ENCODE measurements at regions of chr5 and their contacts with region 1.

Region 1: DNA sequence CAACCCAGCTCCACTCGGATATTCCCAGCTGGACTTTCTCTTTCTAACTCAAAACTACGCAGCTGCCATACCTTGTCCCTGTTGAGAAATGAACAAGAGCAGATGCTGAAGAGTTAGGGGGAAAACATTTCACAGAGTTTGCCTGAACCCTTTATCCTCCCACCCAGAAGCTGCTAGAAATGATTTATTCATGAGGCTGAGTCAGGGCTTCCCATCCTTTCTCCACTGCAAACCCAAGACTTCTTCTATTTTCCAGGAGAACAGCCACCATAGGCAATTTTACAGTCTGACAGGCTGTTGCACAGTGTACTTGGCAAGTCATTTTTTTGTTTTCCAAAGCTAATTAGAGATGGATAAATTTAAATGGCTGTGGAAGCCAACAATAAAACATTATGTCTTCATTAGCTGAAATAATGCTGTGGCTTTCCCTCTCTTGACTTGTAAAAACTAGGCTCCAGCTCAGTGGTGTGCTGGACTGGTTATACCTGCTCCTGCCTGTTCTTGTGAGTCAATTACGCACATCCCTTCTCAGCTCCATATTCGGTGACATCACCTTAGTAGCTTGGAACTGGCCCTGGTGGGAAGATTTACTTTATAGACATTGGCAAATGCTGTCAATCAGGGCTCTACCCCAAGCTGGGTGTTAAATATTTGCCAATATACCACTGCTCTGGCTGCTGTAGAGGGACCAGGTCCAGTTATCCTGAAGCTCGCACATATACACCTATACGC is 71.9 kb downstream of the KIF4B start:
- DNase-seq: no peak

Region 2: DNA sequence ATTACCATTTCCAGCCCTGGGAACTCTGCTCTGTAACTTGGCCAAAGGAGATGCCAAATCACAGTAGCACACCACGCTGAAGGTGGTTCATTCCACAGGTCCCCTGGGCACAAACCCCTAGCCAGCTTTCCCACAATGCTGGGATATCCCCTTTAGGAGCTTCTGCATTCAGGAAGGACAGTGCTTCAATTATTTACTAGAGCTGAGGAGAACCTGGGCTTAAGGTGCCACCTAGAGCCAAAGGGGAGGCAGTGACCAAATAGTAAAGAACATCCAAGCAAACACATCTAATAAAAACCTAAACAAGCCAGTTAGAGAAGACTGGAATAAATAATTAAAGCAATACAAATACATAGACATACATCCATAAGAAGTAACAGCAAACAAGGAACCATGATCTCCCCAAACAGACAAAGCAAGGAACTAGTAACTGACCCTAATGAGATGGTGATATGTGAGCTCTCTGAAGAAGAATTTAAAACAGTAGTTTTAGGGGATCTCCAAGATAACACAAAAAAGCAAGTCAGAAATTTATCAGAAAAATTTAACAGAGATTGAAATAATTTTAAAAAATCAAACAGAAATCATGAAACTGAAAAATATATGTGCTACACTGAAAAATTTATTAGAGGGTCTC is 57.3 kb before region 1 on chr5:
- intact Hi-C with region 1: no loop called
- DNase-seq: no peak

Region 3: DNA sequence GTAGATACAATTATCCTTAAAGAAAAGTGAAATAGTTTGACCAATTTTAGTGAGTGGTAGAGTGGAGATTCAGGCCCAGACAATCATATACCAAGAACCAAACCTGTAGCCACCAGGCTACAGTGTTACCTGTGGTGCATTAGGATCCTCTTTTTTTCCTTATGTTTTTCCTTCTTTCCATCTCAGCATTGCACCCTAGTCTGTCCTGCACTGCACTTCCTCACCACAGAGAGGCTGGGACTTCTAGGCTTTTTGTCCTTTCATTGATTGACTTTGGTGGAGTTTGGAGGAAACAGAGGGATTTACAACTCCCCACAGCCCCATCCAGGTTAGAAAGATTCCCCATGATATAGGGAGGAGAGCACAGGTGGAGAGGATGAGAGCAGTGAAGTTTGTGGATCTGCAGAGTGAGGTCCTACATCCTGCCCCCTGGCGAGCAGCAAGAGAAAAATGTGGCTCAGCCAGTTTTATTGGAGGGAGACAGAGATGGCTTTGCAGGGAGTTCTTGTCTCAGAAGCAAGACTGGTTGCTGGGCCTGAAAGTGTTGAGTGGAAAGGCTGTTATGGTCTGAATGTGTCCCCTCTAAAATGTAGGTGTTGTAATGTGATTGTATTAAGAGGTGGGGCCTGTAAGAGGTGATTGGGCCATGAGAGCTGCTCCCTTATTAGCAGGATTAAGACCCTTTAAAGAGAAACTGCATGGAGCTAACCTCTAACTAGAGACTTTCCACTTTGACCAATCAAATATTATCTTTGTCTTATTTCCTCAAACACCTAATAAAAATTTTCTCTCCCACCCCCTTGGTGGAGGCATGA is 35.7 kb before region 1 on chr5:
- intact Hi-C with region 1: loop called (anchors 5 kb)
- DNase-seq: no peak

Region 4: GRCh38 chr5:155064580-155064979 is 20.9 kb before region 1 on chr5:
- intact Hi-C with region 1: no loop called
- DNase-seq: no peak

Region 5: DNA sequence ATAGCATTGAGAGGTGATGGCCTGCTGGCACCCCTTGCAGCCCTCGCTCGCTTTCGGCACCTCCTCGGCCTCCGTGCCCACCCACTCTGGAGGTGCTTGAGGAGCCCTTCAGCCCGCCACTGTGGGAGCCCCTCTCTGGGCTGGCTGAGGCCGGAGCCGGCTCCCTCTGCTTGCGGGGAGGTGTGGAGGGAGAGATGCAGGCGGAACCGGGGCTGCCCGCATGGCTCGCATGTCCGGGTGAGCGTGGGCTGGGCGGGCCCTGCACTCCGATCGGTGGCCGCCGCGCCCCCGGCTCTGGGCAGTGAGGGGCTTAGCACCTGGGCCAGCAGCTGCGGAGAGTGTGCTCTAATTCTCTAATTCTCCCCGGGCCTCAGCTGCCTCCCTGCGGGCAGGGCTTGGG is 29.2 kb after region 1 on chr5:
- intact Hi-C with region 1: no loop called
- DNase-seq: no peak

Measured in cardiac septum (tissue), 1 donor.